Activated T-helper 1 cell treated with anti-CD3 and anti-CD28 coated beads, Interleukin-12 subunit alpha, Interleukin-12 subunit beta, Interleukin-2, Interleukin-4 antibody, amounts not matched to agents 30 ng/mL and 10 ng/mL and 1 ng/mL, durations not matched to agents 14 hours and 24 hours and 36 hours (primary cell): ENCODE measurements at regions of chr2 and their contacts with region 1.

Region 1: DNA sequence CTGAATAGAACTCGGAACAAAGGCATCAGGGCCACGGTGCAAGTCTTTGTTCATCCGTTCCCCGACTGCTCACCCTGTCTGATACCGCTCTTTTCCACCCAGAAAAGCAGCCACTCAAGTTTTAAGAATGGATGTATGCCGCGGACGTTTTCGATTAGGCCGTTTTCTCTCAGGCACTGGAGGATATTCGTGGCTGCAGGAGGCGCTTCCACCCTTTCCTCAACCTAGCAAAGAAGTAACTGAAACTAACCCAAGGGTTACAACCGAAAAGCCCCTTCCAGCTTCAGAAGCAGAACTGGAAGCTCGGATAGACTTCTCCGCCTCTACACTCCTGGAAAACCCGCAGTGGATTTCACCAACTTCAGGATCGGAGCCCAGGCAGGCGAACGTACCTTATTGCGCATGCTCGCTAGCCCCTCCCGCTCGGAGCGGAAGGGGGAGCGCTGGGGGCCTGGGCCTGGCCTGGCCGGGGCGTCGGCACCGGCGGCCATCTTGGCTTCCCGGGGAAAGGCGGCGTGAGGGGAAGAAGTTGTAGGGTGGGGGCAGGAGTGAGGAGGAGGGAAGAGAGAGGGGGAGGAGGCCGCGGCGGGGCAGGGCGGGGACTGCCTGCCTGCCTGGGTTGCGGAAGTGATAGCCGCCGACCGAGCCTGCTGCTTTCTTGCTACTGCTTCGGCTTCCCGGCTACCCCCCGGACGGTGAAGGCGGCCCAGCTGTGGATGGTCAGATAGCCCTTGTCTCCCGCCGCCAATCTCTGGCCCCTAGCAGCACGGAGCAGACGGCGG is at the start of gene ACTR3:
- DNase-seq: peak; percentile 99
- H3K4me3 Mint-ChIP-seq: peak within 1 kb of the TSS; percentile 100
- H3K27ac Mint-ChIP-seq: peak within 1 kb of the TSS; percentile 99
- H3K4me1 Mint-ChIP-seq: peaks cover 84% of the 10 kb centered on the region
- H3K27me3 Mint-ChIP-seq: no peaks in the 10 kb centered on the region
- total RNA-seq, gene ACTR3: 440 and 451 TPM in 2 replicates

Region 2: GRCh38 chr2:113602869-113603466 is 286.7 kb before region 1 on chr2:
- intact Hi-C with region 1: loop called (anchors 2 kb)
- DNase-seq: no peak
- H3K4me3 Mint-ChIP-seq: peak overlapping the region; percentile 80
- H3K27ac Mint-ChIP-seq: no peak overlapping the region
- H3K4me1 Mint-ChIP-seq: peaks cover 5% of the 10 kb centered on the region
- H3K27me3 Mint-ChIP-seq: peaks cover 3% of the 10 kb centered on the region

Region 3: GRCh38 chr2:113692698-113693428 is 196.8 kb before region 1 on chr2:
- intact Hi-C with region 1: loop called (anchors 1 kb)
- DNase-seq: peak; percentile 32
- H3K4me3 Mint-ChIP-seq: peak overlapping the region; percentile 74
- H3K27ac Mint-ChIP-seq: peak overlapping the region; percentile 96
- H3K4me1 Mint-ChIP-seq: peaks cover 33% of the 10 kb centered on the region
- H3K27me3 Mint-ChIP-seq: peaks cover 8% of the 10 kb centered on the region

Region 4: GRCh38 chr2:113791697-113792590 is 97.7 kb before region 1 on chr2:
- intact Hi-C with region 1: loop called (anchors 1 kb)
- DNase-seq: no peak
- H3K4me3 Mint-ChIP-seq: peak overlapping the region; percentile 65
- H3K27ac Mint-ChIP-seq: peak overlapping the region; percentile 94
- H3K4me1 Mint-ChIP-seq: peaks cover 27% of the 10 kb centered on the region
- H3K27me3 Mint-ChIP-seq: no peaks in the 10 kb centered on the region

Region 5: DNA sequence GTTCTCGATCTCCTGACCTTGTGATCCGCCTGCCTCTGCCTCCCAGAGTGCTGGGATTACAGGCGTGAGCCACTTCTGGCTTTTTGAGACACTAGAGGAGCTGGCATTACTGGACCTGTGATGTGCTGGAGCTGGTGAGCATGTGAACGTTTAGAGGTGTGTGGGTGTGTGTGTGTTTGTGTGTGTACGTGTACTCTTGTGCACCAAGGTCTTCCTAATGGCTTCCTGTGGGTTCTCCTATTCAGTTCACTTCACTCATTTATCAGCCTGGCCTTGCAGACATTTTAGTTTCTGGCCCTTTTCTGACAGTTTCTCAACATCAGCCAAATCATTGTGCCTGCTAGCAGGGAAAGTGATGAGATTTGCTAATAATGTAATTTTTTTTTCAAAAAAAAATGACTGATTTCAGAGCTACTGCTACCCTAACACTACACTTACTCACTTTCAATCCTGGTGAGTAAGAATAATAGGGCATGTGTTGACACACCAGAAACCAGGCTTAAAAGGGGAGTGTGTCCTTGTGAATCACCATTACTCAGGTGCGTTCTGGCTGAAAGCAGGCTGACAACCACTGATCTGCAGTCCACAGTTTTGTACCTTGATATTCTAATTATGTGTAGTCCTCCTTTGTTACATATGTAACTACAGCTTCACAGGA is 40.8 kb before region 1 on chr2:
- intact Hi-C with region 1: loop called (anchors 2 kb)
- DNase-seq: no peak
- H3K4me3 Mint-ChIP-seq: no peak overlapping the region
- H3K27ac Mint-ChIP-seq: no peak overlapping the region
- H3K4me1 Mint-ChIP-seq: no peaks in the 10 kb centered on the region
- H3K27me3 Mint-ChIP-seq: no peaks in the 10 kb centered on the region

Region 6: GRCh38 chr2:113876503-113877387 is 12.9 kb before region 1 on chr2:
- intact Hi-C with region 1: loop called (anchors 1 kb)
- DNase-seq: peak; percentile 72
- H3K4me3 Mint-ChIP-seq: peak overlapping the region; percentile 10
- H3K27ac Mint-ChIP-seq: peak overlapping the region; percentile 81
- H3K4me1 Mint-ChIP-seq: peaks cover 60% of the 10 kb centered on the region
- H3K27me3 Mint-ChIP-seq: no peaks in the 10 kb centered on the region

Region 7: GRCh38 chr2:113922784-113923183 is 33.1 kb after region 1 on chr2:
- intact Hi-C with region 1: loop called (anchors 2 kb)
- DNase-seq: no peak
- H3K4me3 Mint-ChIP-seq: no peak overlapping the region
- H3K27ac Mint-ChIP-seq: no peak overlapping the region
- H3K4me1 Mint-ChIP-seq: peaks cover 16% of the 10 kb centered on the region
- H3K27me3 Mint-ChIP-seq: no peaks in the 10 kb centered on the region

Region 8: GRCh38 chr2:114185501-114185900 is 295.8 kb after region 1 on chr2:
- intact Hi-C with region 1: no loop called
- DNase-seq: no peak
- H3K4me3 Mint-ChIP-seq: no peak overlapping the region
- H3K27ac Mint-ChIP-seq: no peak overlapping the region
- H3K4me1 Mint-ChIP-seq: no peaks in the 10 kb centered on the region
- H3K27me3 Mint-ChIP-seq: no peaks in the 10 kb centered on the region